Caco-2 (cell line): ENCODE measurements at regions of chr12 and their contacts with region 1.

Region 1: GRCh38 chr12:119780786-119781434 is 96.2 kb downstream of the CIT start:
- DNase-seq: peak; percentile 47 to 51
- H3K4me3 ChIP-seq: no peak overlapping the region
- H3K4me3 Mint-ChIP-seq: no peak overlapping the region
- H3K27ac Mint-ChIP-seq: no peak overlapping the region
- H3K4me1 ChIP-seq: no peaks in the 10 kb centered on the region
- H3K4me1 Mint-ChIP-seq: peaks cover 6% of the 10 kb centered on the region
- H3K27me3 ChIP-seq: no peaks in the 10 kb centered on the region
- H3K27me3 Mint-ChIP-seq: no peaks in the 10 kb centered on the region
- CTCF ChIP-seq: peak; percentile 67 to 83

Region 2: GRCh38 chr12:119659289-119659897 is 121.5 kb before region 1 on chr12:
- CTCF ChIA-PET with region 1: interaction called, 16 read pairs
- POLR2A ChIA-PET with region 1: no interaction called
- intact Hi-C with region 1: loop called (anchors 1 kb)
- DNase-seq: peak in 1 of 2 experiments; percentile 56
- H3K4me3 ChIP-seq: no peak overlapping the region
- H3K4me3 Mint-ChIP-seq: no peak overlapping the region
- H3K27ac Mint-ChIP-seq: no peak overlapping the region
- H3K4me1 ChIP-seq: no peaks in the 10 kb centered on the region
- H3K4me1 Mint-ChIP-seq: no peaks in the 10 kb centered on the region
- H3K27me3 ChIP-seq: no peaks in the 10 kb centered on the region
- H3K27me3 Mint-ChIP-seq: no peaks in the 10 kb centered on the region
- CTCF ChIP-seq: peak; percentile 57 to 88

Region 3: DNA sequence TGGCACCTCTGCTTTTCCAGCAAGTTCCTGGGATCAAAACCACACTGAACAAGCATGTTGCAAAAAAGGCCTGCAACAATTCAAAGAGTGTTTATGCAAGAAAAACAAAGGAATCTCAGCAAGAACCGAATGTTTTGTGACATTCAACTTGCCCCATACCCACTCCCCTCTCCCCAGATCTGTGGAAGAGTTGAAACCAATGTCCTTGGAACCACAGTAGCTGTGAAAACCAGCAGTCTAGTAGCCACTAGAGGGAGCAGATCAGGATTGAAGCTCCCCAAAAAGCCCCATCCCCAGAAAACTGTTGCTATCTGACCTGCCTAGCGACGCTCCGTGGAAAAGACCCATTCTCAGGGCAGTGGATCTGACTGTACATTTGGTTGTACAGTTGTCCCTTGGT is 85.9 kb before region 1 on chr12:
- CTCF ChIA-PET with region 1: interaction called, 6 read pairs
- POLR2A ChIA-PET with region 1: no interaction called
- intact Hi-C with region 1: loop called (anchors 10 kb)
- DNase-seq: peak in 1 of 2 experiments; percentile 13
- H3K4me3 ChIP-seq: no peak overlapping the region
- H3K4me3 Mint-ChIP-seq: no peak overlapping the region
- H3K27ac Mint-ChIP-seq: no peak overlapping the region
- H3K4me1 ChIP-seq: no peaks in the 10 kb centered on the region
- H3K4me1 Mint-ChIP-seq: peaks cover 10% of the 10 kb centered on the region
- H3K27me3 ChIP-seq: no peaks in the 10 kb centered on the region
- H3K27me3 Mint-ChIP-seq: no peaks in the 10 kb centered on the region
- CTCF ChIP-seq: peak; percentile 42 to 73

Region 4: GRCh38 chr12:119931402-119931801 is 150.5 kb after region 1 on chr12:
- CTCF ChIA-PET with region 1: no interaction called
- POLR2A ChIA-PET with region 1: no interaction called
- intact Hi-C with region 1: no loop called
- DNase-seq: no peak
- H3K4me3 ChIP-seq: no peak overlapping the region
- H3K4me3 Mint-ChIP-seq: no peak overlapping the region
- H3K27ac Mint-ChIP-seq: no peak overlapping the region
- H3K4me1 ChIP-seq: no peaks in the 10 kb centered on the region
- H3K4me1 Mint-ChIP-seq: no peaks in the 10 kb centered on the region
- H3K27me3 ChIP-seq: no peaks in the 10 kb centered on the region
- H3K27me3 Mint-ChIP-seq: no peaks in the 10 kb centered on the region
- CTCF ChIP-seq: no peak